Spleen (tissue), 13 donors: ENCODE measurements at regions of chr2 and their contacts with region 1.

Region 1: GRCh38 chr2:96208143-96209010 is at the start of gene STARD7:
- DNase-seq: peak; percentile 98
- H3K4me3 ChIP-seq: peak within 1 kb of the TSS; percentile 76 to 100 (median 94)
- H3K27ac ChIP-seq: peak within 1 kb of the TSS; percentile 91 to 99 (median 96)
- H3K4me1 ChIP-seq: peaks cover 41 to 78% (median 56%) of the 10 kb centered on the region in 6 donors
- H3K27me3 ChIP-seq: no peaks in the 10 kb centered on the region
- CTCF ChIP-seq: peak in 6 of 11 experiments; percentile 3 to 46 (median 27)
- POLR2A ChIP-seq: peak; percentile 52 to 97 (median 63)
- total RNA-seq, gene STARD7: 89.8 to 174 (median 123) TPM

Region 2: DNA sequence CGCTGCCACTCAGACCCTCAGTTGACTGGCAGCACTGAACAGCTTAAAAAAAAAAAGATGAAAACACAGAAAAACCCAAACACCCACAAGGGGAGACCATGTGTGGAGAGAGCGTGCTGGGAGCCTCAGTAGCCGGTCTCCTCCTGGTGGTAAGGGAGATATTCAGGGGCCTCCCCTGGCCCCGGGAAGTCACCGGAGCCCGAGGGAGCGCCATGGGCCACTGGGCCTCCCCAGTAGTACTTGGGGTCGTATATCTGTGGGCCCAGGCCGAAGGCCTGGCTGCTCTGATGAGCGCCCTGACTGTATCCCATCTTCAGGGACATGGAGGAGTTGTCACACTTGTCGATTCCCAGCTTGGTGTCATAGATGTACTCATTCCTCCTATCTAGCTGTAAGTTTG is 1482.8 kb before region 1 on chr2:
- intact Hi-C with region 1: no loop called
- DNase-seq: no peak
- H3K4me3 ChIP-seq: no peak overlapping the region
- H3K27ac ChIP-seq: no peak overlapping the region
- H3K4me1 ChIP-seq: no peaks in the 10 kb centered on the region
- H3K27me3 ChIP-seq: no peaks in the 10 kb centered on the region
- CTCF ChIP-seq: no peak
- POLR2A ChIP-seq: no peak

Region 3: DNA sequence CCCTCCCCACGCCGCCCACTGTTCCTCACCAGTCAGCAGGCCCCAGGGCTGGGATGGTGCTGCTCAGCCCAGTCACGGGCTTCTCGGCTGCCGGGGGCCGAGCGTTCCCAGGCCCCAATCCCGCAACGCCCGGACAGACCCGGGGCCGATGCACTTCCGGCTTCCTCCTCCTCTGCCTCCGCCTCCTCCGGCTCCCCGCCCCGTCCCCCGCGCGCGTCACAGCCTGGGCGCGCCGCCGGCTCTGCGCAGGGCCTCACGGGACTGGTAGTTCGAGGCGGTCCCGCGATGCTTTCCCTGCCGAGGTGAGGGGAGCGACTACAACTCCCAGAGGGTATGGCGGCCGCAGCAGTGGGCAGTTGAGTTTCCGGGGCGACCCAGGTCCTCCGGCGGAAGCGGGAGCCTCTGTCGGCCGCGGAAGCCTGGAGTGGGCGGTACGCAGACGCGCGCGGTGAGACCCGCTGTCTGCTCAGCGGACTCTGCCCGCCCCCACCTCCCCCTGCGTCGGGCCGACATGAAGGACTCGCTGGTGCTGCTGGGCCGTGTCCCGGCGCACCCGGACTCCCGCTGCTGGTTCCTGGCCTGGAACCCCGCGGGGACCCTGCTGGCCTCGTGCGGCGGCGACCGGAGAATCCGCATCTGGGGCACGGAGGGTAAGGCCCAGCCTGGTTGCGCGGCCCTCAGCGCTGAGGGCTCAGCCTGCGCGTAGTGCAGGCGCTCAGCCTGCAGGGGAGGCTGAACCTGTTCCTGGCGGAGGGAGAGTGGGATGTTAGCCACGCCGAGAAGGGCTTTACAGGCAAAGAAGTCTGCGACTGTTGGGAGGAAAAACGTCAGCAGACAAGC is 57.7 kb after region 1 on chr2 and contains the starts of genes CIAO1 and TMEM127:
- intact Hi-C with region 1: loop called (anchors 5 kb)
- DNase-seq: peak; percentile 100
- H3K4me3 ChIP-seq: peak within 1 kb of the TSS; percentile 83 to 98 (median 93)
- H3K27ac ChIP-seq: peak within 1 kb of the TSS; percentile 75 to 99 (median 94)
- H3K4me1 ChIP-seq: peaks cover 37 to 65% (median 56%) of the 10 kb centered on the region in 6 donors
- H3K27me3 ChIP-seq: no peaks in the 10 kb centered on the region
- CTCF ChIP-seq: peak; percentile 11 to 56 (median 28)
- POLR2A ChIP-seq: peak; percentile 54 to 74 (median 65)
- total RNA-seq, gene CIAO1: 63.9 to 122 (median 76.7) TPM
- total RNA-seq, gene TMEM127: 61.1 to 83.3 (median 70.0) TPM